GM10248 (cell line): ENCODE measurements at regions of chr15 and their contacts with region 1.

Region 1: DNA sequence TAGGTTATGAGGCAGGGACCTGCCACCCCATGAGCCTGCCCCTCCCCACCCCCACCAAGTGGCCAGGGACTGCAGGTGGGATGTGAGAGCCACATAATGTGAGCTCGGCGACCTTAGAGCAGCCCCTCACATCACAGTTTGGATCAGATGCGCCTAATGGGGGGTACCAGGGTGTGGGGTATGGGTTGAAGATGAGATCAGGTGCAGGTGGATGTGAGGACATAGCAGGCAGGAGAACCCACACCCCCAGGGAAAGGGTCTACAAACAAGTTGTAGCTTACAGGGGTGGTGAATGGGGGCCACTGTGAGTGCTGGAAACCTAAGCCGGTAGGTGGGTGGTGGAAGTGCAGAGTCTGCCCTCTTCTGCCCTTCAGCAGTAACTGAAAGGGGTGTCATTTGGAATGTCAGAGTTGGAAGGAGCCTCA is 94.0 kb downstream of the CORO2B start:
- DNase-seq: no peak
- CTCF ChIP-seq: no peak

Region 2: GRCh38 chr15:67587754-67588153 is 1085.0 kb before region 1 on chr15:
- CTCF ChIA-PET with region 1: no interaction called
- POLR2A ChIA-PET with region 1: no interaction called
- DNase-seq: no peak
- CTCF ChIP-seq: no peak

Region 3: GRCh38 chr15:68252925-68253534 is 419.8 kb before region 1 on chr15:
- CTCF ChIA-PET with region 1: interaction called, 20 read pairs
- POLR2A ChIA-PET with region 1: no interaction called
- DNase-seq: peak; percentile 68
- CTCF ChIP-seq: peak; percentile 80

Region 4: GRCh38 chr15:68550481-68551295 is 122.1 kb before region 1 on chr15:
- CTCF ChIA-PET with region 1: interaction called, 57 read pairs
- POLR2A ChIA-PET with region 1: no interaction called
- DNase-seq: peak; percentile 74
- CTCF ChIP-seq: peak; percentile 81

Region 5: GRCh38 chr15:68580026-68580882 is 92.5 kb before region 1 on chr15:
- CTCF ChIA-PET with region 1: interaction called, 11 read pairs
- POLR2A ChIA-PET with region 1: no interaction called
- DNase-seq: no peak
- CTCF ChIP-seq: no peak

Region 6: DNA sequence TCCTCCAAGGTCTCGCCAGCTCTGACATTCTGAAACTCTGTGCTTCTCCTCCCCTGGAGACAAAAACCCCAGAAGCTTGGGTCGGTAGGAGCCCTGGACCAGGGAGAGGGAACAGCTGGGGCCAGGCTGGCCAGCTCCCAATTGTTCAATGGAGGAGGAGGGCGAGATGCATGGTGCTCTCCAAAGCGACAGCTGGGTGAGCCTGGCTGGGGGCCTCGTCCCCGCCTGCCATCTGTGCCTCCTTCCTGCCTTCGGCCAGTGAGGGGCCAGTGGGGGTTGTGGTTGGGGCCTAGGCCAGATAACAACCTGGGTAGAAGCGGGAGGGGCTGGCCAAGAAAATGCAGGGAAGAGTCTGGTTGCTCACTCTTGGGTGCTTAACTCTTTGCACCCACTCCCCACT is 14.6 kb before region 1 on chr15:
- CTCF ChIA-PET with region 1: interaction called, 47 read pairs
- POLR2A ChIA-PET with region 1: no interaction called
- DNase-seq: no peak
- CTCF ChIP-seq: no peak

Region 7: DNA sequence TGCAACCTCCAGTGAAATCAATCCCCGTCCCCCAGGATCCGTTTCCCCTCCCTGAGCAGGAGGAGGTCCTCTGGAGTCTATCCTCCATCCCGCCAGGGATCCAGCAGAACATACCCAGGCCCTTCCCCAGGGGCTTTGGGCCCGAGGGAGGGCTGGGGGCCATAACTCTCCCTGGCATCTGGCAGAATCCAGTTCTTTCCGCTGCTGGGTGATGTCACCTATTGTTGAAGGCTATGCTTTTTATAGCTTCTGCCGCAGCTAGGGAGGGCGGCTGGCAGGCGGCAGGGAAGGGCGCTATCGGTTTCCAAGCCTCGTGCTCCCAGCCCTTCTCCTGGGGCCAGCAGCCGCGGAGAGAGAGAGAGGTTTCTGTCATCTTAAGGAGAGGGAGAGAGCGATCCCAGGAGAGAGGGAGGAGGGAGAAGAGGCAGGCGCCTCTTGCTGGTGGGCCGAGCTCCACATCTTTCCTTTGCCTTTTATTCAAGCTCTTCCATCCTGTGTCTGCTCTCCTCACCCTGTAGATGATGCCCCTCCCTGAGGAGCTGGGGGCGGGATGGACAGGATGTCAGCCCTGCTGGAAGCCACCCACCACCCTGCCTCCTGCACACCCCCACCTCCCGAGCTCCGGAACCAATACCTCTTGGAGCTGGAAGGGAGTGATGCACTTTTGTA is 27.8 kb after region 1 on chr15:
- CTCF ChIA-PET with region 1: interaction called, 33 read pairs
- POLR2A ChIA-PET with region 1: no interaction called
- DNase-seq: no peak
- CTCF ChIP-seq: no peak

Region 8: GRCh38 chr15:68768321-68768720 is 95.5 kb after region 1 on chr15:
- CTCF ChIA-PET with region 1: no interaction called
- POLR2A ChIA-PET with region 1: no interaction called
- DNase-seq: no peak
- CTCF ChIP-seq: no peak

Region 9: GRCh38 chr15:68806220-68807060 is 133.6 kb after region 1 on chr15:
- CTCF ChIA-PET with region 1: no interaction called
- POLR2A ChIA-PET with region 1: no interaction called
- DNase-seq: no peak
- CTCF ChIP-seq: no peak